ENCODE measurements at regions of chr1 and their contacts with region 1.

Region 1: DNA sequence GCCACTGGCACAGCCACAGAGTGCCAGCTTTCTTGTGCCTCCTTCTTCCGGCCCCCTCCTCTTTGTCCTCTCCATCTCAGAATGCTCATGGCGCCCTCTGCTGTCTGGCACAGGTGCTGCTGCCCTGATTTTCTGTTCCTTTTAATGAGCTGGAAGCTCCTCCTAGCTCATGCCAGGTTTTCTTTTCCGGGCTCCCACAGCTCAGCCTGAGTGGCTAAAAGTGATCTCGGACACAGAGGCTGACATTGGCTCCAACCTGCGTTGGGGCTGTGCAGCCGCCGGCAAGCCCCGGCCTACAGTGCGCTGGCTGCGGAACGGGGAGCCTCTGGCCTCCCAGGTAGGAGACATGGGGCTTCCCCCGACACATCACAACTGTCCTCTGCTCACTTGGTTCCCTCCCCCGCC is 18.7 kb downstream of the CNTN2 start:
- DNase-seq: peak; percentile 71
- H3K4me3 ChIP-seq: no peak overlapping the region
- H3K27ac ChIP-seq: no peak overlapping the region
- H3K4me1 ChIP-seq: no peaks in the 10 kb centered on the region
- H3K27me3 ChIP-seq: peaks cover 0 to 2% of the 10 kb centered on the region in 2 experiments
- CTCF ChIP-seq: peak; percentile 80 to 89
- POLR2A ChIP-seq: no peak

Region 2: GRCh38 chr1:204633665-204634064 is 428.0 kb before region 1 on chr1:
- CTCF ChIA-PET with region 1: no interaction called
- POLR2A ChIA-PET with region 1: no interaction called
- dilution Hi-C with region 1: no loop called
- intact Hi-C with region 1: no loop called
- DNase-seq: no peak
- H3K4me3 ChIP-seq: no peak overlapping the region
- H3K27ac ChIP-seq: no peak overlapping the region
- H3K4me1 ChIP-seq: no peaks in the 10 kb centered on the region
- H3K27me3 ChIP-seq: peaks cover 2 to 3% of the 10 kb centered on the region in 2 experiments
- CTCF ChIP-seq: no peak
- POLR2A ChIP-seq: no peak

Region 3: DNA sequence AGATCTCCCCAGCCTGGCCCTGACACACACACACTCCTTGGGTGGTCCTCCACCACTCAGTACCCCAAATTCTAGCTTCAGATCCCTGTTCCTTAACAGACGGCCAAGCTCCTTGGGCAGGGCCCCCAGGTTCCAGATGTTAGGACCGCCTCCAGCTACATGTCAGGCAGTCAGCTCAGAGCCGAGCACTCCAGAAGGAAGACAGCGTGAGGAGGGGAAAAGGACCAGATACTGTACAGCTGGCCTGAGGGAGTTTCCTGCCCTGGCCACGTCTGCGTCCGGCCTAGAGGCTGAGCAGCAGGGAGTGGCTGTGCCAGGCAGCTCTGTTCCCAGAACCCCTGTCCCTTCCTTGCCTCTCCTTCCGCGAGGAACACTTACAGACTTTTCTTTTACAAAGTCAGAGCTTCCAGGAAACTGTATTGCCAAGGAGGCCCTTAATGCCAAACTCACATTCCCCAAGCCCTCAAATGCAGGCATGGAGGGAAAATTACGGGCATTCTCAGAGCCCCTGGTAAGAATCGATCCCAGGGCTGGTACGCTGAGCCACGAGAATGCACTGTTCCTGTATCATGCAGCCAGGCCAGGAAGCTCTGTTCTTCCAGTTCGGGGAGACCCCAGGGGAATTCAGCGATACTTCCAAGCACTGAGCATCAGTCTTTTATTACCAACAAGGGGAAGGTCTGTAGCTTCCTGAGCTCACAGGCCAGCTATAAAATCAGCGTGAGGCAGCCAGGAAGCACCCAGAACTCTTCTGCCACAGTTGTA is 63.9 kb before region 1 on chr1:
- CTCF ChIA-PET with region 1: interaction called, 86 read pairs
- POLR2A ChIA-PET with region 1: no interaction called
- dilution Hi-C with region 1: no loop called
- intact Hi-C with region 1: no loop called
- DNase-seq: no peak
- H3K4me3 ChIP-seq: no peak overlapping the region
- H3K27ac ChIP-seq: no peak overlapping the region
- H3K4me1 ChIP-seq: no peaks in the 10 kb centered on the region
- H3K27me3 ChIP-seq: peaks cover 0 to 2% of the 10 kb centered on the region in 2 experiments
- CTCF ChIP-seq: no peak
- POLR2A ChIP-seq: no peak

Region 4: GRCh38 chr1:205032508-205032907 is 29.2 kb before region 1 on chr1:
- CTCF ChIA-PET with region 1: interaction called, 24 read pairs
- POLR2A ChIA-PET with region 1: no interaction called
- dilution Hi-C with region 1: no loop called
- intact Hi-C with region 1: no loop called
- DNase-seq: no peak
- H3K4me3 ChIP-seq: no peak overlapping the region
- H3K27ac ChIP-seq: no peak overlapping the region
- H3K4me1 ChIP-seq: no peaks in the 10 kb centered on the region
- H3K27me3 ChIP-seq: peaks cover 10 to 15% of the 10 kb centered on the region in 2 experiments
- CTCF ChIP-seq: no peak
- POLR2A ChIP-seq: no peak

Region 5: GRCh38 chr1:205077158-205077933 is 15.7 kb after region 1 on chr1:
- CTCF ChIA-PET with region 1: interaction called, 63 read pairs
- POLR2A ChIA-PET with region 1: no interaction called
- dilution Hi-C with region 1: no loop called
- intact Hi-C with region 1: no loop called
- DNase-seq: no peak
- H3K4me3 ChIP-seq: no peak overlapping the region
- H3K27ac ChIP-seq: no peak overlapping the region
- H3K4me1 ChIP-seq: no peaks in the 10 kb centered on the region
- H3K27me3 ChIP-seq: no peaks in the 10 kb centered on the region
- CTCF ChIP-seq: no peak
- POLR2A ChIP-seq: no peak

Region 6: DNA sequence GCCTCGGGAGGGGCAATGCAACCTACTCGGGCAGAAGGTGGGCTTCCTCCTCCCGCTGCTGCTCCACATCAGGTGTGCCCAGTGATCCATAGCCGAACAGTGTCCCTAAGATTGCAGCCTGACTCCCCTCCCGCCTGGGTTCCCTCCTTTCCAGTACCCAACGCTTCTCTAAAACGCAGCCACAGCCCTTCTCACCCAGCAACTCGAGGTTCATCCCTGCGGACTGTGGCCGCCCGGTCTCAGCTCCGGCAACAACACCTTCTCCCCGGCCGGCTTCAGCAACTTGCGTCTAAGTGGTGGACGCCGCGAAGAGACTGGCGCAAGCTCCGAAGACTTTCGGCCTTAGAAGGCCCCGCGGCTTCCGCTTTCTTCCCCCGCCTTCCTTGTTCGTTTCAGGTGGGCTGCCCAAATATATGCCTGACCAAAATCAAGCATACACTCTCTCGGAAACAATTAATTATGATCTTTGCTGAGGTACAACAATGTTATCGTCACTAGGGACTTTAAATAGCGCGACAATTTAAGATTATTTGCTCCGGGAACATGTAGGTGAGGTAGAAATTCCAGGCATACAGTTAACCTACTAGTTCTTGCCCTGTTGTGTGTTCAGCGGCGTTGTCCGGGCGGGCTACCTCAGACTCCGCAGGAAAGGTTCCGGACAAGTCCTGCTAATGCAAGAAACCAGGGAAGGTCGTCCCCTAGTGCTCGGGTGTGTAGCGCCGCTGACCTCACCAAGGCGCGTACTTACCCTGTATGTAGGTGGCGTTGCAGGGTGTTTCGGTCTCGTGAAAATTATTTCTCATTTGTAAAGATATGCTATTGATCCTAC is 60.2 kb after region 1 on chr1 and contains the start of gene RBBP5:
- CTCF ChIA-PET with region 1: interaction called, 22 read pairs
- POLR2A ChIA-PET with region 1: no interaction called
- dilution Hi-C with region 1: no loop called
- intact Hi-C with region 1: no loop called
- DNase-seq: peak; percentile 98
- H3K4me3 ChIP-seq: peak within 1 kb of the TSS; percentile 52 to 90 (median 72)
- H3K27ac ChIP-seq: peak within 1 kb of the TSS; percentile 91
- H3K4me1 ChIP-seq: peaks cover 12% of the 10 kb centered on the region
- H3K27me3 ChIP-seq: no peaks in the 10 kb centered on the region
- CTCF ChIP-seq: peak; percentile 71 to 77
- POLR2A ChIP-seq: peak; percentile 85
- total RNA-seq, gene RBBP5: 14.2 and 15.6 TPM in 2 replicates

Region 7: DNA sequence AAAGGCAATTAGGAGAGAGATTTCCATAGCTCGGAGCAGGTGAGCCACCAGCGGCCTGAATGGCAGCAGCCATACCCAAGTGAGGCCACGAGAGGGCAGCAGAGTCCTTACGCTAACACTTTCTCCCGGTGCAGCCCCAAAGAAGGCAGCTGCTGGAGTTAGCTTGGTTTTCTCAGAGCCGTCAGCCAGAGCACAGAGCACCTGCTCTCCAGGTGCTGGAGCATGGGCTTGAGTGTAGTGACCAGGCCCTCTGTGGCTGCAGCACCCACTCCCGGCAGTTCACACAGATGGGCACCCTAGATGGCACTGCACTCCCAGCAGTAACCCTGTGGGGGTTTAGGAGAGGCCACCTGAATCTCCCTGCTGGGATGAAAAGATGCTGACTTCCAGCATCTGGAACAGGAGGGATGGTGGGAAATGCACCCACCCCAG is 211.9 kb after region 1 on chr1:
- CTCF ChIA-PET with region 1: interaction called, 14 read pairs
- POLR2A ChIA-PET with region 1: no interaction called
- dilution Hi-C with region 1: no loop called
- intact Hi-C with region 1: no loop called
- DNase-seq: peak; percentile 69
- H3K4me3 ChIP-seq: no peak overlapping the region
- H3K27ac ChIP-seq: no peak overlapping the region
- H3K4me1 ChIP-seq: peaks cover 18% of the 10 kb centered on the region
- H3K27me3 ChIP-seq: no peaks in the 10 kb centered on the region
- CTCF ChIP-seq: peak; percentile 97 to 98
- POLR2A ChIP-seq: no peak

Region 8: GRCh38 chr1:205335643-205336091 is 274.0 kb after region 1 on chr1:
- CTCF ChIA-PET with region 1: no interaction called
- POLR2A ChIA-PET with region 1: no interaction called
- dilution Hi-C with region 1: no loop called
- intact Hi-C with region 1: no loop called
- DNase-seq: peak; percentile 85
- H3K4me3 ChIP-seq: no peak overlapping the region
- H3K27ac ChIP-seq: no peak overlapping the region
- H3K4me1 ChIP-seq: no peaks in the 10 kb centered on the region
- H3K27me3 ChIP-seq: peaks cover 8 to 14% of the 10 kb centered on the region in 2 experiments
- CTCF ChIP-seq: peak; percentile 97
- POLR2A ChIP-seq: no peak

Region 9: DNA sequence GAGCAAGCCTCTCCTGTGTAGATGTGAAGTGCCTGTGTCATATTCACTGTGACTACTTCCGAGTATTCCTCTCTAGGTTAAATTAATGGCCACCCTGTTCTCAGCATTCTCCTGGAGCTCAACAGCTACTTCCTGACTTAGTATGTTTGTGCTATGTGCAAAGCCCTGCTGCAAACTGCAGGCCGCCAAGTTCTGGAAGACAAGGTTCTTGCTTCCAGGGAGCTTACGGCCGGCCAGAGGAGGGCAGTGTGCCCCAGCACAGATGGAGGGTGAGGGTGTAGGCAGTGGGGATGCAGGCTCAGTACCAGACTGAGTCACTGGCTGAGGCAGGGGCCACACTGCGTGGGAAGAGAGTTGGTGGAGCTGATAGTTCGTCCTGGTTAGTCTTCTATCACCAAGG is 527.0 kb after region 1 on chr1:
- CTCF ChIA-PET with region 1: no interaction called
- POLR2A ChIA-PET with region 1: no interaction called
- dilution Hi-C with region 1: no loop called
- intact Hi-C with region 1: no loop called
- DNase-seq: peak; percentile 83
- H3K4me3 ChIP-seq: no peak overlapping the region
- H3K27ac ChIP-seq: no peak overlapping the region
- H3K4me1 ChIP-seq: peaks cover 4% of the 10 kb centered on the region
- H3K27me3 ChIP-seq: no peaks in the 10 kb centered on the region
- CTCF ChIP-seq: peak; percentile 68 to 84
- POLR2A ChIP-seq: no peak

Measured in endothelial cell of umbilical vein (primary cell).